Activated naive CD4-positive, alpha-beta T cell treated with anti-CD3 and anti-CD28 coated beads for 36 hours (primary cell): ENCODE measurements at regions of chr4 and their contacts with region 1.

Region 1: GRCh38 chr4:25913851-25914669 is at the start of gene SMIM20:
- DNase-seq: peak; percentile 89
- H3K4me3 Mint-ChIP-seq: peak within 1 kb of the TSS; percentile 96
- H3K27ac Mint-ChIP-seq: peak within 1 kb of the TSS; percentile 97
- H3K4me1 Mint-ChIP-seq: peaks cover 17% of the 10 kb centered on the region
- H3K27me3 Mint-ChIP-seq: no peaks in the 10 kb centered on the region
- total RNA-seq, gene SMIM20: 28.1 to 33.2 TPM

Region 2: GRCh38 chr4:24584175-24584850 is 1329.7 kb before region 1 on chr4 and contains the start of gene DHX15:
- CTCF ChIA-PET with region 1: no interaction called
- intact Hi-C with region 1: loop called (anchors 2 kb)
- DNase-seq: peak; percentile 94
- H3K4me3 Mint-ChIP-seq: peak within 1 kb of the TSS; percentile 95
- H3K27ac Mint-ChIP-seq: peak within 1 kb of the TSS; percentile 96
- H3K4me1 Mint-ChIP-seq: peaks cover 37% of the 10 kb centered on the region
- H3K27me3 Mint-ChIP-seq: no peaks in the 10 kb centered on the region
- total RNA-seq, gene DHX15: 197 to 199 TPM

Region 3: DNA sequence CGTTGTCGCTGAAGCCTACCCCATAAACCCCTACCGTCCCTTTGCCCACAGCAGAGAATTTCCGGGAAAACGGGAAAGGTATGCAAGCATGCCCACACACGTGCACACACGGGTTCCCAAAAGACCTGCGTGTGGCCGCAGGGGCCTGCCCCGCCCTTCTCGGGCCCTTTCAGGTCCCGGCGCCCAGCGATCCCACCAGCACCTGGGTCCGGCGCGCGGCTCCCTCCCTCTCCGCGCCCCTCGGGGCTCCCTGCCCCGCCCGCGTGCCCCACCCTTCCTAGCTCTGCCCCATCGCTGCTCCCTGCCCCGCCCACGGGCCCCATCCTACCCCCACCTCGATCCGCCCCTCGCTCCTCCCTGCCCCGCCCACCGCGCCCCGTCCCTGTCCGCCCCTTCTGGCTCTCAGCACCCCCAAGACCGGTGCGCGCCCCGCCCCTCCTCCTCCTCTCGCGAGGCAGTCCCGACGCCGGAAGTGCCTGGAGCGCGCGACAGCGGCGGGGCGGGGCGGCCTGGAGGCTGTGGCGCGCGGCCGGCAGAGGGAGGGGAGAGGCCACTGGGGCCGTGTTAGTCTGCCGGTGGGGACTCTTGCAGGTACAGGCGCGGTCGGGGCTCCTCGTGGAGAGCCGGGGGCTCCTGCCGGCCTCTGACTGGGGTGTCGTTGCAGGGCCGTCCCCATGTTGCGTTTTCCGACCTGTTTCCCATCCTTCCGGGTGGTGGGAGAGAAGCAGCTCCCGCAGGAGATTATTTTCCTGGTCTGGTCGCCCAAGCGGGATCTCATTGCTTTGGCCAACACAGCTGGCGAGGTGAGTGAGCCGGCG is 537.1 kb before region 1 on chr4 and contains the start of gene ANAPC4:
- CTCF ChIA-PET with region 1: no interaction called
- intact Hi-C with region 1: loop called (anchors 1 kb)
- DNase-seq: peak; percentile 95
- H3K4me3 Mint-ChIP-seq: no peak within 1 kb of the TSS
- H3K27ac Mint-ChIP-seq: peak within 1 kb of the TSS; percentile 78
- H3K4me1 Mint-ChIP-seq: peaks cover 9% of the 10 kb centered on the region
- H3K27me3 Mint-ChIP-seq: no peaks in the 10 kb centered on the region
- total RNA-seq, gene ANAPC4: 23.1 to 27.3 TPM

Region 4: DNA sequence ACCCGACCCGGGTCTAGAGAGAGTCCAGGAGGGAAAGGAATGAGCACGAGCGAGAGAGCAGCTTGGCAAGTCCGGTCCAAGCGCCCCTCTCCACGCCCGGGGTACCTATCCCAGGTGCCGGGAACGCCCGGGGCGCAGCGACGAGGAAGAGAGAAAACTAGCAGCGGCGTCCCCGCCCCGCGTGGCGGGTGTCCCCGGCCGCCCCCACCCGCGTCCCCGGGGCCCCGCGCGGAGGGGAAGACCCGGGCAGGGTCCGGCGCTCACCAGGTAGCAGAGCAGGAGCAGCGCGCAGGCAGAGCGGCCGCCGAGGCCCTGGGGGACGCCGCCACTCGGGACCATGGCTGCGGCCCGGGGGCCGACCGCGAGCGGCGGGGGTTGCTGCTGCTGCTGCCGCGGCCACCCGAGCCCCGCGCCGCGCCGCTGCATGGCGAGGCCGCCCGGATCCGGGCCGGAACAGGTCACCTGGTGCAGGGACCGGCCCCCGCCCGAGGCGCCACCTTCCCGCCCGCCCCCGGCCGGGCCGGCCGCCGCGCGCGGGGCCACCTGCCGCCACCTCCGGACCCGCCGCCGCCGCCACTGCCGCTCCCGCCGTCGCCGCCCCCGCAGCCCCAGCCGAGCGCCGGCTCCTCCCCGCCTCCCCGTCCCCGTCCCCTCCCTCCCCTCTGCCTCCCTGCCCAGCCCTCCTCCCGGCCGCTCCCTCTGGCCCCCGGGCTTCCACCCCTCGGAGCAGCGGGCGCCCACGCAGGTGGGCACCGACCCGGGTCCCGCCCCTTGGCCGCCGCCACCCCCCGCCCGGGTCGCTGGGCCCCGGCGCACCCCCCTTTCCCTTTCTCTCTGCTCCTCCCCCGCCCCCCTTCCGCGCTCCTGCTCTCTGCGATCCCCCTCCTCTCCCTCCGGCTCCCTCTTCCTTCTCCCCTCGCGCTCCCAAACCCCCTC is 51.4 kb before region 1 on chr4 and contains the start of gene SEL1L3:
- CTCF ChIA-PET with region 1: interaction called, 3 read pairs
- intact Hi-C with region 1: loop called (anchors 1 kb)
- DNase-seq: peak; percentile 53
- H3K4me3 Mint-ChIP-seq: peak within 1 kb of the TSS; percentile 93
- H3K27ac Mint-ChIP-seq: peak within 1 kb of the TSS; percentile 92
- H3K4me1 Mint-ChIP-seq: peaks cover 33% of the 10 kb centered on the region
- H3K27me3 Mint-ChIP-seq: no peaks in the 10 kb centered on the region
- total RNA-seq, gene SEL1L3: 32.3 to 38.2 TPM

Region 5: DNA sequence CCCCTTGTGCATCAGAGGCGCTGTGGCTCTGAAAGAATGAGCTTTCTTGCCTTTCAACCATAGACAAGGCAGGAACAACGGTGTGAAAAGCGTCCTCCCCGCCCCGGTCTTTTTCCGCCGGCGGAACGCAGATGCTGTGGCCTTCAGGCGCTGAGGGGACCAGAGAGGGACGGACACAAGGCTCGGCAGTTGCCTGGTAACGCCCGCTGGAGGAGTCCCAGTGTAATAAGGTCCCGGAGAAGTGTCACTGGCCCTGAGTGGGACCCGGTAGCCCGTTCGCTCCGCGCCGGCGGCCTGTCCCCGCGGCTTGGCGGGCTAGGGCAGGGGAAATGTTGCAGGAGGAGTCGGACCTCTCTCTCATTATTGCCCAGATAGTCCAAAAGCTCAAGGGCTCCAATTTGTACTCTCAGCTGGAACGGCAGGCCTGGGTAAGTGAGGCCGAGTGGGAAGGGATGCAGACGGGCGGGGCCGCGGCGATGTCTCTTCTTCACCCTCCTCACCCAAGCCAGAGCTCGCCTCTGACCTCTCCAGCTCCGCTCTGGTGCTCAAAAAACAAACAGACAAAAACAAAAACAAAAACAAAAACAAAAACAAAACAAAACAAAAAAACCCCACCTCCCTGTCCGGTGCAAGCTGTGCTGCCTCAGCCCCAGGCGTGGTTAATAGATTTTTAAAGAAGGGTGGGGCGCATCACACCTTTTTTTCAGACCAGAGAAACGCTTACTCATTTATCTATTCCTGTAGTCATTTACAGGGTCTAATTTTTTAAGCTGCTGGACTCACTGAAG is 670.0 kb after region 1 on chr4 and contains the start of gene TBC1D19:
- CTCF ChIA-PET with region 1: no interaction called
- intact Hi-C with region 1: loop called (anchors 2 kb)
- DNase-seq: peak; percentile 92
- H3K4me3 Mint-ChIP-seq: peak within 1 kb of the TSS; percentile 93
- H3K27ac Mint-ChIP-seq: peak within 1 kb of the TSS; percentile 92
- H3K4me1 Mint-ChIP-seq: peaks cover 32% of the 10 kb centered on the region
- H3K27me3 Mint-ChIP-seq: no peaks in the 10 kb centered on the region
- total RNA-seq, gene TBC1D19: 3.8 to 4.1 TPM